CD8-positive, alpha-beta T cell (primary cell): ENCODE measurements at regions of chr13 and their contacts with region 1.

Region 1: DNA sequence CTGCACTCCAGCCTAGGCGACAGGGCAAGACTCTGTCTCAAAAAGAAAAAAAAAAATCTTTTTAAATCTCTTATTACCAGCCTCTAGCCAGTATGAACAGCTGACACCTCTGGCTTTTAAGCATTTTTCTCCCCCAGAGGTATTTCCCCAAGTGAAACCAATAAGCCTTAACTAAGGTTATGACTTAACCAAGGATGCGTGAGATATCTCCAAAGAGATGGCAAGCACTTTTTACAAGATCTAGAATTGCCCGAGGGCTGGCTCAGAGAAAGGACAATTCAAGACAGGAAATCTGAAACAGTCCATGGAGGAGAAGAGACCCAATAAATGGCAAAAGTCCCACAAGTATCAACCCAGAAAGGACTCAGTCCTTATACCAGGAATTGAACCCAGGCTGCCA is 362.1 kb downstream of the FOXO1 start:
- DNase-seq: no peak
- ATAC-seq: no peak
- H3K4me3 ChIP-seq: no peak overlapping the region
- H3K4me3 Mint-ChIP-seq: no peak overlapping the region
- H3K27ac ChIP-seq: no peak overlapping the region
- H3K27ac Mint-ChIP-seq: no peak overlapping the region
- H3K4me1 ChIP-seq: no peaks in the 10 kb centered on the region
- H3K4me1 Mint-ChIP-seq: peaks cover 17% of the 10 kb centered on the region
- H3K27me3 ChIP-seq: no peaks in the 10 kb centered on the region
- H3K27me3 Mint-ChIP-seq: no peaks in the 10 kb centered on the region
- CTCF ChIP-seq: no peak

Region 2: GRCh38 chr13:39665763-39666162 is 638.6 kb before region 1 on chr13:
- CTCF ChIA-PET with region 1: no interaction called
- POLR2A ChIA-PET with region 1: no interaction called
- intact Hi-C with region 1: no loop called
- DNase-seq: no peak
- ATAC-seq: no peak
- H3K4me3 ChIP-seq: no peak overlapping the region
- H3K4me3 Mint-ChIP-seq: no peak overlapping the region
- H3K27ac ChIP-seq: no peak overlapping the region
- H3K27ac Mint-ChIP-seq: no peak overlapping the region
- H3K4me1 ChIP-seq: no peaks in the 10 kb centered on the region
- H3K4me1 Mint-ChIP-seq: no peaks in the 10 kb centered on the region
- H3K27me3 ChIP-seq: no peaks in the 10 kb centered on the region
- H3K27me3 Mint-ChIP-seq: no peaks in the 10 kb centered on the region
- CTCF ChIP-seq: no peak

Region 3: GRCh38 chr13:39779337-39780265 is 524.8 kb before region 1 on chr13:
- CTCF ChIA-PET with region 1: no interaction called
- POLR2A ChIA-PET with region 1: no interaction called
- intact Hi-C with region 1: no loop called
- DNase-seq: peak in 8 of 9 experiments; percentile 29 to 77 (median 64)
- ATAC-seq: peak; percentile 65
- H3K4me3 ChIP-seq: no peak overlapping the region
- H3K4me3 Mint-ChIP-seq: peak overlapping the region; percentile 1
- H3K27ac ChIP-seq: peak overlapping the region in 1 of 2 experiments; percentile 30
- H3K27ac Mint-ChIP-seq: peak overlapping the region; percentile 58
- H3K4me1 ChIP-seq: peaks cover 25% of the 10 kb centered on the region
- H3K4me1 Mint-ChIP-seq: peaks cover 31% of the 10 kb centered on the region
- H3K27me3 ChIP-seq: no peaks in the 10 kb centered on the region
- H3K27me3 Mint-ChIP-seq: no peaks in the 10 kb centered on the region
- CTCF ChIP-seq: no peak

Region 4: DNA sequence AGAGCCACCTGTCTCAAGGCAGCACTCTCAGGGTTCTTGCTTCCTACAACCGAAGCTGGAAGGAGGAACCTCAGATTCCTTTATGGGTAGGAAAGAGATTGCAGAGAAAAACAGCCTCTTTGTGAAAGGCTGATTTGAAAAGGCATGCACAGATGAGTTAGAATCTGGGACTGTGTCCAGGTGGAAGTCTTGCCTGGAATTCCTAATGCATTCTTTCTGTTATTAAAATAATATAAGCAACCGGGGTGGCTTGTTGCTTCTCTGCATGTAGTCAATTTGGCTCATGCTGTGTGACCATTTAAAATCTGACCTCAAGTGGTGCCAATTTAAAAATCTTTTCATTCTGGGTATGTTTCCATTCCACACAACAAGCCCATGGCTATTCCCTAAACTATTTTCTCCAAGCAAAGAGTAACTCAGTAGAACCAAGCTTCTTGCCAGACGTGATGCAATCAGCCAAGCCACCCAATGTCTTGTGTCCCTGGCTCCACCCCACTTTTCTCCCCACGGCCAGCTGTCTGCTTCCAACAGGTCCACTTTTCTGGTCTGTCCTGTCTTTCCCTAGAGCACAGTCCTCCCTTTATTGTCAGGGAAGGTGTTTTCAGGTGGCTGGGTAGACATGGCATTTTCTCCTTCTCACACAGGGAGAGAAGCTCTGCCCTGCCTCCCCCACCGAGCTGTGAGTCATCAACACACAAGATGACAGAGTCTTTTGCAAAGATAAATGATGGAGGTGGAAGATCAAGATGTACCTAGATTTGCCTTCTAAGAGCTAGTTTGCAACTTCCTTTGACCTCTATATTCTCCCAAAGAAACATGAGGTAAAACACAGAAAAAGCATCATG is 32.2 kb before region 1 on chr13:
- CTCF ChIA-PET with region 1: no interaction called
- POLR2A ChIA-PET with region 1: no interaction called
- intact Hi-C with region 1: no loop called
- DNase-seq: peak in 5 of 9 experiments; percentile 17 to 56 (median 31)
- ATAC-seq: no peak
- H3K4me3 ChIP-seq: no peak overlapping the region
- H3K4me3 Mint-ChIP-seq: no peak overlapping the region
- H3K27ac ChIP-seq: no peak overlapping the region
- H3K27ac Mint-ChIP-seq: peak overlapping the region; percentile 46
- H3K4me1 ChIP-seq: peaks cover 22% of the 10 kb centered on the region
- H3K4me1 Mint-ChIP-seq: peaks cover 32% of the 10 kb centered on the region
- H3K27me3 ChIP-seq: no peaks in the 10 kb centered on the region
- H3K27me3 Mint-ChIP-seq: no peaks in the 10 kb centered on the region
- CTCF ChIP-seq: no peak

Region 5: GRCh38 chr13:42028113-42028799 is 1723.9 kb after region 1 on chr13:
- CTCF ChIA-PET with region 1: no interaction called
- POLR2A ChIA-PET with region 1: no interaction called
- intact Hi-C with region 1: loop called in 1 of 2 experiments (anchors 5 kb)
- DNase-seq: no peak
- ATAC-seq: no peak
- H3K4me3 ChIP-seq: no peak overlapping the region
- H3K4me3 Mint-ChIP-seq: no peak overlapping the region
- H3K27ac ChIP-seq: no peak overlapping the region
- H3K27ac Mint-ChIP-seq: no peak overlapping the region
- H3K4me1 ChIP-seq: no peaks in the 10 kb centered on the region
- H3K4me1 Mint-ChIP-seq: no peaks in the 10 kb centered on the region
- H3K27me3 ChIP-seq: peaks cover 0 to 4% of the 10 kb centered on the region in 2 experiments
- H3K27me3 Mint-ChIP-seq: peaks cover 6% of the 10 kb centered on the region
- CTCF ChIP-seq: no peak